GM12878 (cell line): ENCODE measurements at regions of chr6 and their contacts with region 1.

Region 1: GRCh38 chr6:79233611-79234149 is 802 bp downstream of the HMGN3 start:
- DNase-seq: peak; percentile 51
- ATAC-seq: peak; percentile 87
- H3K4me3 ChIP-seq: peak overlapping the region; percentile 79
- H3K27ac ChIP-seq: peak overlapping the region; percentile 95
- H3K4me1 ChIP-seq: 0 out of 2 replicates have a peak, but pooled peaks cover 5% of the 10 kb centered on the region
- H3K27me3 ChIP-seq: no peaks in the 10 kb centered on the region
- CTCF ChIP-seq: peak in 1 of 3 experiments; percentile 48; a peak in 2 of 6 replicates
- EP300 ChIP-seq: no peak
- POLR2A ChIP-seq: peak; percentile 88
- RAD21 ChIP-seq: no peak

Region 2: GRCh38 chr6:78867370-78868040 is 366.2 kb before region 1 on chr6 and contains the start of gene IRAK1BP1:
- CTCF ChIA-PET with region 1: no interaction called
- POLR2A ChIA-PET with region 1: no interaction called
- RAD21 ChIA-PET with region 1: no interaction called
- SMC1A ChIA-PET with region 1: no interaction called
- in situ Hi-C with region 1: no loop called
- intact Hi-C with region 1: loop called (anchors 5 kb)
- DNase-seq: peak; percentile 49
- ATAC-seq: peak; percentile 98
- H3K4me3 ChIP-seq: peak within 1 kb of the TSS; percentile 90
- H3K27ac ChIP-seq: peak within 1 kb of the TSS; percentile 90
- H3K4me1 ChIP-seq: no peaks in the 10 kb centered on the region
- H3K27me3 ChIP-seq: no peaks in the 10 kb centered on the region
- CTCF ChIP-seq: peak in 2 of 3 experiments; percentile 14 to 25; a peak in 2 of 6 replicates
- EP300 ChIP-seq: no peak
- POLR2A ChIP-seq: peak; percentile 80
- RAD21 ChIP-seq: no peak
- polyA plus RNA-seq, gene IRAK1BP1: 2.3 to 2.6 TPM

Region 3: GRCh38 chr6:79250107-79250514 is 16.4 kb after region 1 on chr6:
- CTCF ChIA-PET with region 1: interaction called, 7 read pairs
- POLR2A ChIA-PET with region 1: interaction called, 7 read pairs
- RAD21 ChIA-PET with region 1: interaction called, 8 read pairs
- SMC1A ChIA-PET with region 1: interaction called, 20 read pairs
- in situ Hi-C with region 1: no loop called
- intact Hi-C with region 1: no loop called
- DNase-seq: peak; percentile 51
- ATAC-seq: peak; percentile 84
- H3K4me3 ChIP-seq: no peak overlapping the region
- H3K27ac ChIP-seq: no peak overlapping the region
- H3K4me1 ChIP-seq: peaks cover 13% of the 10 kb centered on the region
- H3K27me3 ChIP-seq: no peaks in the 10 kb centered on the region
- CTCF ChIP-seq: peak; percentile 32 to 50 (median 49); a peak in 4 of 6 replicates
- EP300 ChIP-seq: 0 out of 4 replicates have a peak, but pooled peaks of 1 of the 2 experiments have one; percentile 19
- POLR2A ChIP-seq: no peak
- RAD21 ChIP-seq: peak; percentile 63

Region 4: DNA sequence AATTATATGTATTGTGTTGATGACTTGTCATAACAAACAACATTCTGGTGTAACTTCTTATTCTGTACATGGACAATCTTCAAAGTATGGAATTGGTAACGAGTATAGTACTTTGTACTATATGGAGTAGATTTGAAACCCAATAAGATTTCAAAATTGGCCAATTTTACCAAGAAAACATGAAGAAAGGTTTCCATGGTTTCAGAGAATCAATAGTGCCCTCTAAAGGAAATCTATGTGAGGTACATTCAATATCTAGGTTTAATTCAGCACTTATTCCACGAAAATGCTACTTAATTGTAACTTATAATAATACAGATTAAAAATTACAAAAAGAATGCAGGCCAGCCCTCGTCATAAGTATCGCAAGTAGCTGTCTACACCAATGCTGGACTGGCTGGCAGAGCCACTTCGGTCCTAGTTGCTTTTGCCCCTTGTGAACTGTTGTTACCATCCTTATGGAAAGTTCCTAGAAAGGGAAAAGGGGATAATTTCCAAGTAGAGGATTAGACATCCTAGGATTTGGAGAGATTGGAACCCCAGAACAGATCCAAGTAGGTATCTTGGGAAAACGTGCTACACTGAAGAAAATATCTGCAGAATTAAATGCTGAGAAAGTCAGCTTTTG is 232.6 kb after region 1 on chr6:
- CTCF ChIA-PET with region 1: no interaction called
- POLR2A ChIA-PET with region 1: no interaction called
- RAD21 ChIA-PET with region 1: no interaction called
- SMC1A ChIA-PET with region 1: no interaction called
- in situ Hi-C with region 1: no loop called
- intact Hi-C with region 1: loop called (anchors 10 kb)
- DNase-seq: no peak
- ATAC-seq: peak; percentile 53
- H3K4me3 ChIP-seq: no peak overlapping the region
- H3K27ac ChIP-seq: no peak overlapping the region
- H3K4me1 ChIP-seq: no peaks in the 10 kb centered on the region
- H3K27me3 ChIP-seq: no peaks in the 10 kb centered on the region
- CTCF ChIP-seq: peak; percentile 38 to 63 (median 45); a peak in 4 of 6 replicates
- EP300 ChIP-seq: no peak
- POLR2A ChIP-seq: no peak
- RAD21 ChIP-seq: peak; percentile 73

Region 5: GRCh38 chr6:79544939-79545450 is 311.3 kb after region 1 on chr6:
- CTCF ChIA-PET with region 1: interaction called, 3 read pairs
- POLR2A ChIA-PET with region 1: no interaction called
- RAD21 ChIA-PET with region 1: interaction called, 8 read pairs
- SMC1A ChIA-PET with region 1: no interaction called
- in situ Hi-C with region 1: no loop called
- intact Hi-C with region 1: loop called (anchors 5 kb)
- DNase-seq: peak; percentile 74
- ATAC-seq: peak; percentile 91
- H3K4me3 ChIP-seq: peak overlapping the region; percentile 26; the same call in 1 of the 2 replicates
- H3K27ac ChIP-seq: peak overlapping the region; percentile 75
- H3K4me1 ChIP-seq: peaks cover 21% of the 10 kb centered on the region
- H3K27me3 ChIP-seq: no peaks in the 10 kb centered on the region
- CTCF ChIP-seq: peak; percentile 34 to 56 (median 56)
- EP300 ChIP-seq: peak; percentile 72 to 89; a peak in 3 of 4 replicates
- POLR2A ChIP-seq: no peak
- RAD21 ChIP-seq: peak; percentile 49